ENCODE measurements at regions of chr17 and their contacts with region 1.

Region 1: DNA sequence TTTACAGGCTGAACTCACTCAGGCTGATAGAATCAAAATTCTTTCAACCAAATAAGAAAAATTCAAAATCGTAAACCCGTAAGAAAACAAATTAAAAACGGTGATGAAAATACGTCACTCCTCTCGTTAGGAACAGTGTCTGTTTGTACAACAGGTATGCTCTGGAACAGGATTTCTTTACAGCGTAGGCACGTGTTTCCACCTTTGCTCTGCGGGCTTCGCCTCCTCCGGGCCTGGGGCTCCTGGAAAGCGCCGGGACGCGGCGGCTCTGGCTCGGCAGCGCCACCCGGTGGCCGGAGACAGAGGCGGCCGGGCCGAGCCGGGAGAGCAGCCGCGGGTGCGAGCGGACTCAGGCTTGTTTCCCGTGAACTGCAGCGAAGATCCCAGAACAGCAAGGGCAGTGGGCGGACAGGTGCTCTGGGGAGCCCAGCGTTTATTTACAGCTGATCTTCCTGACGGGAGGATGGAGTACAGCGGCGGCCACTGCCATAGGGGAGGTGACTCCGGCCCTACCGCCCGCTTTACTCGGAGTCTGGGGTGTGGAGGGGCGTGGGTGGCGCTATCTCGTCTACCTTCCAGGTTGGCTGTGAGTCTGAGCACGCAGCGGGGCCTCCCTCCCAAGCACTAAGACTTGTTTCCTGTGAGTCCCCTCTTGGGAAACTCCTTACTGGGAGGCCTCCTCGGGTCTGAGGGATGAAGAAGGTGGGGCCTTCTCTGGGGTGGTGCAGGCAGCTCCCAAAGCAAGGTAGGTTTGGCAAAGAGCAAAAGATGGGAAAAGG is 40.5 kb upstream of the ATP2A3 start:
- DNase-seq: peak; percentile 34 to 81 (median 54)
- ATAC-seq: peak; percentile 93
- H3K4me3 ChIP-seq: no peak overlapping the region
- H3K4me3 Mint-ChIP-seq: no peak overlapping the region
- H3K27ac ChIP-seq: no peak overlapping the region
- H3K27ac Mint-ChIP-seq: no peak overlapping the region
- H3K4me1 ChIP-seq: peaks cover 9% of the 10 kb centered on the region
- H3K4me1 Mint-ChIP-seq: peaks cover 8% of the 10 kb centered on the region
- H3K27me3 ChIP-seq: no peaks in the 10 kb centered on the region
- H3K27me3 Mint-ChIP-seq: no peaks in the 10 kb centered on the region
- CTCF ChIP-seq: peak; percentile 97

Region 2: GRCh38 chr17:3935140-3935542 is 69.6 kb before region 1 on chr17:
- CTCF ChIA-PET with region 1: interaction called, 3 read pairs
- POLR2A ChIA-PET with region 1: no interaction called
- intact Hi-C with region 1: loop called (anchors 1 kb)
- DNase-seq: peak in 10 of 14 experiments; percentile 22 to 61 (median 38)
- ATAC-seq: no peak
- H3K4me3 ChIP-seq: no peak overlapping the region
- H3K4me3 Mint-ChIP-seq: no peak overlapping the region
- H3K27ac ChIP-seq: no peak overlapping the region
- H3K27ac Mint-ChIP-seq: no peak overlapping the region
- H3K4me1 ChIP-seq: no peaks in the 10 kb centered on the region
- H3K4me1 Mint-ChIP-seq: no peaks in the 10 kb centered on the region
- H3K27me3 ChIP-seq: no peaks in the 10 kb centered on the region
- H3K27me3 Mint-ChIP-seq: no peaks in the 10 kb centered on the region
- CTCF ChIP-seq: peak; percentile 25